Kidney (tissue), 22 donors: ENCODE measurements at regions of chr2 and their contacts with region 1.

Region 1: GRCh38 chr2:74876081-74876886 is 42.4 kb downstream of the HK2 start:
- DNase-seq: peak in 3 of 5 donors; percentile 41 to 76 (median 74)
- H3K4me3 ChIP-seq: no peak overlapping the region
- H3K27ac ChIP-seq: no peak overlapping the region
- H3K4me1 ChIP-seq: no peaks in the 10 kb centered on the region
- H3K27me3 ChIP-seq: no peaks in the 10 kb centered on the region
- CTCF ChIP-seq: peak; percentile 67

Region 2: DNA sequence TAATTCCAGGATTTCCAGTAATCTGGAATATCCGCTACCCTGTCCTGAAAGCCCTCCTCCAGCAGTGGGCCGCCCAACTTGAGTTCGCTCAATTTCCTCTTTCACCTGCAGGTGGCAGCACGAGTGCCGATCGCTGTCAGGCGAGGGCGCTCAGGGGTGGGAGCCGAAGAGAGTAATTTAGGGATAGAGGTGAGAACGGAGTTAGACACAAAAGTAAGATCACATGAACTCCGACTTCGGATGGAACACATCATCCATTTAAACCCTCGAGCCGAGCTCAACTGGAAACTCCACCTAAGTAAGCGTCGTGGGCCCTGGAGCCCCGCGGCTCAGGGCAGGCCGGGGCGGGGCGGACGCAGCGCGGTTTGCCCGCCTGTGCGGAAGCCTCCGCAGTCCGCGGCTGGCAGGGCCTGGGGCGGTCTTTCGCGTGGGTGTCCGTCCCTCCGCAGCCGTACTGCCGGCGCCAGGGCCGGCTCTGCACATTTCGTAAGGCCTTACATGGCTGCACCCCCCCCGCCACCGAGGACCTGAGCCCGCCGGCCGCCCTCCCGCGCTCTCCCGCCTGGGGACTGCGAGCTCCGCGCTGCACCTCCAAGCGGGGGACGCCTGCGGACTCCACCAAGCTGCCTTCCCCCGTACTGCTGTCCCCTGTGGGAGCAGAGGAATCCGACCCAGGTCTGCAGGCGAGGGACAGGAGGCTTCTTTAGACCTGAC is 161.0 kb before region 1 on chr2:
- intact Hi-C with region 1: loop called (anchors 5 kb)
- DNase-seq: peak; percentile 84 to 93 (median 87)
- H3K4me3 ChIP-seq: peak overlapping the region; percentile 51 to 63 (median 51)
- H3K27ac ChIP-seq: no peak overlapping the region
- H3K4me1 ChIP-seq: peaks cover 0 to 2% (median 0%) of the 10 kb centered on the region in 3 donors
- H3K27me3 ChIP-seq: peaks cover 2% of the 10 kb centered on the region
- CTCF ChIP-seq: peak; percentile 89

Region 3: DNA sequence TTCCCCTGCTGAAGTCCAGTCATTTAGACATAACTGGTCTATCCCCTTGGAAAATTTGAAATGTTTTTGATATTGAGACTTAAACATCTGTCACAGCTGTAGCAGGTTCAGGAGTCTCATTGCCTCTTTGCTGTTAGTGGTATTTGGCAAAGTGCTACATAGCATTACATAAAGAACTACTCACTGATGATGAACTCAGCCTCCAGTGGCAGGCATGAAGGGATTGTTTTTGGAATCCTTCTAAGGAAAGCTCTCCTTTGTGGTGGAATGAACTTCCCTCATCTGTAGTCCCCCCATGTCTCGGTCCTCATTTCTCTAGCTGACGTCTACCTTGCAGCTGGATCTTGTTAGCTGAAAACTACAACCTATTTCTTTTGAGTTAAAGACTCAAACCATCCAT is 211.5 kb after region 1 on chr2:
- intact Hi-C with region 1: no loop called
- DNase-seq: peak in 2 of 5 donors; percentile 16 to 65
- H3K4me3 ChIP-seq: no peak overlapping the region
- H3K27ac ChIP-seq: no peak overlapping the region
- H3K4me1 ChIP-seq: peaks cover 0 to 4% (median 2%) of the 10 kb centered on the region in 3 donors
- H3K27me3 ChIP-seq: no peaks in the 10 kb centered on the region
- CTCF ChIP-seq: no peak

Region 4: GRCh38 chr2:75361486-75361885 is 485.2 kb after region 1 on chr2:
- intact Hi-C with region 1: no loop called
- DNase-seq: no peak
- H3K4me3 ChIP-seq: no peak overlapping the region
- H3K27ac ChIP-seq: no peak overlapping the region
- H3K4me1 ChIP-seq: no peaks in the 10 kb centered on the region
- H3K27me3 ChIP-seq: no peaks in the 10 kb centered on the region
- CTCF ChIP-seq: no peak